ENCODE measurements at regions of chr1 and their contacts with region 1.

Region 1: GRCh38 chr1:45490626-45491486 is at the start of gene TESK2:
- DNase-seq: peak; percentile 97 to 99
- H3K4me3 ChIP-seq: peak within 1 kb of the TSS; percentile 92
- H3K4me3 Mint-ChIP-seq: no peak within 1 kb of the TSS
- H3K27ac Mint-ChIP-seq: no peak within 1 kb of the TSS
- H3K4me1 ChIP-seq: no peaks in the 10 kb centered on the region
- H3K4me1 Mint-ChIP-seq: peaks cover 15% of the 10 kb centered on the region
- H3K27me3 ChIP-seq: no peaks in the 10 kb centered on the region
- H3K27me3 Mint-ChIP-seq: no peaks in the 10 kb centered on the region
- CTCF ChIP-seq: peak in 1 of 2 experiments; percentile 1
- total RNA-seq, gene TESK2: 11.9 and 14.7 TPM in 2 replicates

Region 2: GRCh38 chr1:45018599-45019230 is 472.1 kb before region 1 on chr1:
- CTCF ChIA-PET with region 1: interaction called, 10 read pairs
- POLR2A ChIA-PET with region 1: no interaction called
- intact Hi-C with region 1: loop called (anchors 1 kb)
- DNase-seq: peak; percentile 56 to 63
- H3K4me3 ChIP-seq: no peak overlapping the region
- H3K4me3 Mint-ChIP-seq: no peak overlapping the region
- H3K27ac Mint-ChIP-seq: no peak overlapping the region
- H3K4me1 ChIP-seq: no peaks in the 10 kb centered on the region
- H3K4me1 Mint-ChIP-seq: no peaks in the 10 kb centered on the region
- H3K27me3 ChIP-seq: no peaks in the 10 kb centered on the region
- H3K27me3 Mint-ChIP-seq: no peaks in the 10 kb centered on the region
- CTCF ChIP-seq: peak; percentile 65 to 86

Region 3: DNA sequence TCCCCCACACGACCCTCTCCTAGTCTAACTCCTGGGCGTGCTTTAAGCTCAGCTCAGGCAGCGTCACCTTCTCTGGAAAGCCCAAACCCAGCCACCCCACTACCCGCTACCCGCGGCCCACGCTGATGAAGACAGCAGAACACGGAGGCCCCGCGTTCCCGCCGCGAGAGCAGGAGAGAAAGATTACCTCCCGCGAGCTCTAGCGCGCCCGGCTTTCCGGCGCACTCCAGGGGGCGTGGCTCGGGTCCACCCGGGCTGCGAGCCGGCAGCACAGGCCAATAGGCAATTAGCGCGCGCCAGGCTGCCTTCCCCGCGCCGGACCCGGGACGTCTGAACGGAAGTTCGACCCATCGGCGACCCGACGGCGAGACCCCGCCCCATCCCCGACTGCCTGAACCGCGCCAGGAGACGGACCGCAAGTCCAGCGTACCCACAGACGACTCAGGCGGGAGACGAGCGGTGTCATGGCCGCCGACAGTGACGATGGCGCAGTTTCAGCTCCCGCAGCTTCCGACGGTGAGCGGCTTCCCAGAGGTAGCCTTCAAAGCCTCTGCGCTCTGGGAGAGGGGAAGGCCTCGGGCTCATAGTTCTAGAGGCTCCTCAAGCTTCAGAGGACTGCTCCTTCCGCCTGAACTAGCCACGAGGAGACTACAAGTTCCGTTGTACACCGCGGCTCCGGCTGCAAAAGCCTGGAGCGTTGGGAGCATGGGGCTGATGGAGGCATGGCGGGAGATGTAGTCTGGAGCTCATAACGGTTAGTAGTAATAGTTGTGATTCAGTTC is 150.9 kb before region 1 on chr1 and contains the starts of genes MUTYH and TOE1:
- CTCF ChIA-PET with region 1: interaction called, 17 read pairs
- POLR2A ChIA-PET with region 1: interaction called, 25 read pairs
- intact Hi-C with region 1: loop called (anchors 1 kb)
- DNase-seq: peak; percentile 96
- H3K4me3 ChIP-seq: peak within 1 kb of the TSS; percentile 67
- H3K4me3 Mint-ChIP-seq: peak within 1 kb of the TSS; percentile 99
- H3K27ac Mint-ChIP-seq: peak within 1 kb of the TSS; percentile 99
- H3K4me1 ChIP-seq: peaks cover 39% of the 10 kb centered on the region
- H3K4me1 Mint-ChIP-seq: peaks cover 43% of the 10 kb centered on the region
- H3K27me3 ChIP-seq: no peaks in the 10 kb centered on the region
- H3K27me3 Mint-ChIP-seq: no peaks in the 10 kb centered on the region
- CTCF ChIP-seq: no peak
- total RNA-seq, gene MUTYH: 46.3 and 48.4 TPM in 2 replicates
- total RNA-seq, gene TOE1: 15.5 and 19.0 TPM in 2 replicates

Region 4: GRCh38 chr1:45359882-45360513 is 130.9 kb before region 1 on chr1:
- CTCF ChIA-PET with region 1: interaction called, 13 read pairs
- POLR2A ChIA-PET with region 1: interaction called, 5 read pairs
- intact Hi-C with region 1: loop called (anchors 1 kb)
- DNase-seq: peak in 1 of 2 experiments; percentile 53
- H3K4me3 ChIP-seq: no peak overlapping the region
- H3K4me3 Mint-ChIP-seq: no peak overlapping the region
- H3K27ac Mint-ChIP-seq: no peak overlapping the region
- H3K4me1 ChIP-seq: no peaks in the 10 kb centered on the region
- H3K4me1 Mint-ChIP-seq: peaks cover 20% of the 10 kb centered on the region
- H3K27me3 ChIP-seq: no peaks in the 10 kb centered on the region
- H3K27me3 Mint-ChIP-seq: no peaks in the 10 kb centered on the region
- CTCF ChIP-seq: peak; percentile 39 to 40

Region 5: DNA sequence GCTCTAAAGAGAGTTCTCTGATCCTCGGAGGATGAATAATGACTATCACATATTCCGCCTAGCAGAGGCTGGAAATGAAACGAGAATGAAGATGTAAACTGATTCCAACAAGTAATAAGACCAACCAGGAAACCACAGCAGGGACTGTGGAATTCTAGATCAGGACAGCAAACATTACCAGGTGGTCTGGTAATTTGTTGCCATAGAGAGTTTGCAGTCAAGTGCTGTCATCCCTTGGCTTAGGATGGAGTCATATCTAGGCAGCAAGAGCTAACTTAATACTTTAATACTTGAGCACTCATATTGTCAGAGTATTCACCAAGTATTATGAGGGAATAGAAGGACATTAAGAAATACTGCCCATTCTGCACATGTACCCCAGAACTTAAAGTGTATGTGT is 105.6 kb before region 1 on chr1:
- CTCF ChIA-PET with region 1: no interaction called
- POLR2A ChIA-PET with region 1: no interaction called
- intact Hi-C with region 1: no loop called
- DNase-seq: no peak
- H3K4me3 ChIP-seq: no peak overlapping the region
- H3K4me3 Mint-ChIP-seq: no peak overlapping the region
- H3K27ac Mint-ChIP-seq: no peak overlapping the region
- H3K4me1 ChIP-seq: no peaks in the 10 kb centered on the region
- H3K4me1 Mint-ChIP-seq: no peaks in the 10 kb centered on the region
- H3K27me3 ChIP-seq: no peaks in the 10 kb centered on the region
- H3K27me3 Mint-ChIP-seq: no peaks in the 10 kb centered on the region
- CTCF ChIP-seq: no peak

Region 6: DNA sequence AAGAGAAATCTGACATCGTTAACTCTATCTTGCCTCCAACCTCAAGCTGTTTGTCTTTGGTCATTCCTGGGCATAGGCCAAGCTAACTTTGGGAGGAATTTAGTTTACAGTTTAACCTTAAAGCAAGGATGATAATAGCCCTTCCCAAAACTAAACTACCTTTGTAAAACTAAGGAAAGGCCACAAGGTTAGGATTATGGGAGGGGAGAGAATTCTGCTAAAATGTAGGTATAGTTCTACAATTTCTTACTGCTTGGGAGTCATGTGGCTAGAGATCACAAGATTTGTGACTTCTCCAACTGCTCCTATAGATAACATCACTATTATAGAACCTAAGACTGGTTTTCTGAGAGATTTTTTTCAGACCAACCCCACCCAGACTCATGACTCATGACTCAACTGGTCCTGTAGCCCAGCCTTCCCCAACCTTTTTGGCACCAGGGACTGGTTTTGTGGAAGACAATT is 80.0 kb before region 1 on chr1:
- CTCF ChIA-PET with region 1: no interaction called
- POLR2A ChIA-PET with region 1: no interaction called
- intact Hi-C with region 1: no loop called
- DNase-seq: no peak
- H3K4me3 ChIP-seq: no peak overlapping the region
- H3K4me3 Mint-ChIP-seq: no peak overlapping the region
- H3K27ac Mint-ChIP-seq: no peak overlapping the region
- H3K4me1 ChIP-seq: peaks cover 7% of the 10 kb centered on the region; the same call in 1 of the 2 replicates
- H3K4me1 Mint-ChIP-seq: no peaks in the 10 kb centered on the region
- H3K27me3 ChIP-seq: no peaks in the 10 kb centered on the region
- H3K27me3 Mint-ChIP-seq: no peaks in the 10 kb centered on the region
- CTCF ChIP-seq: no peak

Region 7: DNA sequence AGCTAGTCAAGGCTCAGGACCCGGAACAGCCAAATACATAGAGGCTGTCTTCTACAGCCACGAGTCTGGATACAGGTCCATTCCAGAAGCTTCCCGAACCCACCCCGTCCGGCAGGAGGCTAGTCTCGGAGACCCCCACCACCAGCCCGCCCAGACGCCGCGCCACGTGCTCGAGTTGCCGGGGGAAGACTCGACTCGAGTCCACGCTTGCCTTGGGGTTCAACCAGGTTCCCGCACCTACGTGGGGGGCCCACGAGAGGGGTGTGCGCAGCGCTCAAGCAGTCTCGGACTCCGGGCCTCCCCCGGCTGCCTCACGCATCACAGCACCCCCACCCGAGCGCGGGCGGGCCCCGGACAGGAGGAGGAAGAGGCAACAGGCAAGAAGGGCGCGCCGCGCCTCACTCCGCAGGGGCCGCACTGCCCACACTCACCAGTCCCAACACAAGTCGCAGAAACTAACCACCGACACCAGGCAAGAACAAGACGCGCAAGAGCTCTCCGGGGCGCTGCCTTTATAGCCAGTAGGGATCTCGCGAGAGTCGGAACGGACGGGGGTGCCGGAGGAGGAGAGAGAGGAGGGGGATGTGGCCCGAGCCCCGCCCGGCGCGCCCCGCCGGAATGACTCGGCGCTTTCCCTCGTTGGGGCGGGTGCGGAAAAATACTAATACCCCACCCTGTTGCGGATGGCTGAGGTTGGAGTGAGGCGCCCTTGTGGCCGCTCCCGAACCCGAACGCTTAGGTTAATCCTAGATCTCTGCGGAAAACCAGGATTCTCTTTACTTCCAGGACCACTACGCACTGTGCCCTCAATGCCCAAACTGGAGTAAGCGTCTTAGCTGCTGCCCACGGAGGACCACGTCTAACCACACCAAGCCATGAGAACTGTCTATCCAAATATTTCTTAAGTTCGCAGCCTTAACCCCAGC is 30.8 kb after region 1 on chr1 and contains the start of gene PRDX1:
- CTCF ChIA-PET with region 1: no interaction called
- POLR2A ChIA-PET with region 1: interaction called, 10 read pairs
- intact Hi-C with region 1: no loop called
- DNase-seq: peak; percentile 96 to 97
- H3K4me3 ChIP-seq: peak within 1 kb of the TSS; percentile 75
- H3K4me3 Mint-ChIP-seq: peak within 1 kb of the TSS; percentile 82
- H3K27ac Mint-ChIP-seq: peak within 1 kb of the TSS; percentile 98
- H3K4me1 ChIP-seq: peaks cover 46% of the 10 kb centered on the region
- H3K4me1 Mint-ChIP-seq: peaks cover 28% of the 10 kb centered on the region
- H3K27me3 ChIP-seq: no peaks in the 10 kb centered on the region
- H3K27me3 Mint-ChIP-seq: no peaks in the 10 kb centered on the region
- CTCF ChIP-seq: peak in 1 of 2 experiments; percentile 1
- total RNA-seq, gene PRDX1: 637 and 684 TPM in 2 replicates

Region 8: GRCh38 chr1:45673956-45674355 is 183.1 kb after region 1 on chr1:
- CTCF ChIA-PET with region 1: no interaction called
- POLR2A ChIA-PET with region 1: no interaction called
- intact Hi-C with region 1: no loop called
- DNase-seq: no peak
- H3K4me3 ChIP-seq: no peak overlapping the region
- H3K4me3 Mint-ChIP-seq: no peak overlapping the region
- H3K27ac Mint-ChIP-seq: peak overlapping the region; percentile 45
- H3K4me1 ChIP-seq: 0 out of 2 replicates have a peak, but pooled peaks cover 7% of the 10 kb centered on the region
- H3K4me1 Mint-ChIP-seq: peaks cover 7% of the 10 kb centered on the region
- H3K27me3 ChIP-seq: no peaks in the 10 kb centered on the region
- H3K27me3 Mint-ChIP-seq: no peaks in the 10 kb centered on the region
- CTCF ChIP-seq: no peak

Region 9: GRCh38 chr1:45686317-45687013 is 195.6 kb after region 1 on chr1 and contains the start of gene GPBP1L1:
- CTCF ChIA-PET with region 1: no interaction called
- POLR2A ChIA-PET with region 1: no interaction called
- intact Hi-C with region 1: loop called (anchors 10 kb)
- DNase-seq: peak; percentile 95 to 97
- H3K4me3 ChIP-seq: peak within 1 kb of the TSS; percentile 77
- H3K4me3 Mint-ChIP-seq: peak within 1 kb of the TSS; percentile 84
- H3K27ac Mint-ChIP-seq: peak within 1 kb of the TSS; percentile 86
- H3K4me1 ChIP-seq: no peaks in the 10 kb centered on the region; the same call in 1 of the 2 replicates
- H3K4me1 Mint-ChIP-seq: no peaks in the 10 kb centered on the region
- H3K27me3 ChIP-seq: no peaks in the 10 kb centered on the region
- H3K27me3 Mint-ChIP-seq: no peaks in the 10 kb centered on the region
- CTCF ChIP-seq: no peak
- total RNA-seq, gene GPBP1L1: 57.3 and 61.8 TPM in 2 replicates